ENCODE measurements at regions of chr18 and their contacts with region 1.

Region 1: DNA sequence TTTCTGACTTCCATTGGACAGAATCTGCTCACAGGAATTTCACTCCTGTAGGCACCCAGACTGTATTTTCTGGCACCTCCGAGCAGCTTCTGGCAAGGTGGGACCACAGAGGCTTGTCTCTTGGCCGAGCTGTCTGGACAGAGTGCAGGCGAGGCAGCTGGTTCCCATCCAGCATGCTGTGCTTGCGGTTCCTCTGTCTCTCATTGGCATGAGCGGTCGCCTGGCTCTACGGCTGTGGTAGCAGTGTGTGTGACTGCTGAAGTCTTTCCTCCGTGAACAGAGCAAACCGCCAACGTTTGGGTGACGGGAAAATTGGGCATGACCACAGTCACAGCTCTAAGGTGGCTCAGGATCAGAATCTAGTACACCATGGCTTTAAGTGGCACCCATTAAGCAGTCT is 411.7 kb upstream of the NETO1 start:
- DNase-seq: no peak

Region 2: DNA sequence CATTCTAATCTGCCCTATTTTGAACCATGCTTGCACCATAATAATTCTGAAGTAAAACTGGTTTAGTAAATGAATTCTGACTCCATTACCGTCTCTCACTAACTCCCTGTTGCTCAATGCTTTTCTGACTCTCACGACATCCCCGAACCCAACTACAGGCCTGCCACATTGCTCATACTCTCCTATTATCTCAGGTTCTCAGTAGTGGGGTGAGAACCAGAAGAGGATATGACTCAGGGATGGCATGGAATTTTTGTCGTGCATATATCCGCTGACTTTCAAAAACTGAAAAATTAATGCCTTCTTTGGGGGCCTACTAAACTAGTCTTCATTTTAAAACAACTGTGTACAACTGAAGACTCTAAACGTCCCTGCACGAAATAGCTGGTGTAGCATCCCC is 446.0 kb before region 1 on chr18:
- intact Hi-C with region 1: no loop called
- DNase-seq: no peak

Region 3: DNA sequence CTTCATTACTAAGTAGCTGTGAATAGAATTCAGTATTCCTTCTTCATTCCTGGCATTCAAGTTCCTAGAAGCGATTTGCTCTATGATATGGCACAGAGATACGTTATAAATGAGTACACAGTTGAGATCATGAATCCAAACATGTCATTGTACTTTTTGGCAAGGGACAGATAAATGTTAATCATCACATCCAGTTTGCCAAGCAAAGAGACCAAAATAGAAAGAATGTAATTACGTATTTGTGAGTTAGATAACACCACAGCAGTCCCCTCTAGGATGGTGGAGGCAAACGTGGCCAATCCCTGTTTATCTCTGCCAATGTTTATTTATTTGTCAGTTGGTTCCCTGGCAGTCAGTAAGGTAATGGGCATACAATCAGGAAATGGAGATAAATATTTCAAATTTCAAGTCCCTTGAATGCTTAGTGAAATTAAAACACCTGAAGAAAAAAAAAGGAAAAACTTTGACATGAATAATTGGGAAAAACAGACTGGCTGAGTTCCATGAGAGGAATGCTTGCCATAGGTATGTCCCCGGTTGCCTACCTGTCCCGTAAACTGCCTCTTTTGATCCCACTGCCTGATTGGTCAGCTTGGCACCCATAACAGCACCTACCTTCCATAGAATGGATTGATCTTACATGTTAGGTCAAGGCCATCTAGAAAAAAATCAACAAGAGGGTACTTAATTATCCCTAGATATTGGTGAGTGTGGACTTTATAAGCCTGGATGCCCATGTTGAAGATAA is 39.4 kb after region 1 on chr18:
- intact Hi-C with region 1: loop called in 1 of 2 experiments (anchors 1 kb)
- DNase-seq: no peak